Activated naive CD4-positive, alpha-beta T cell treated with anti-CD3 and anti-CD28 coated beads for 36 hours (primary cell): ENCODE measurements at regions of chr6 and their contacts with region 1.

Region 1: DNA sequence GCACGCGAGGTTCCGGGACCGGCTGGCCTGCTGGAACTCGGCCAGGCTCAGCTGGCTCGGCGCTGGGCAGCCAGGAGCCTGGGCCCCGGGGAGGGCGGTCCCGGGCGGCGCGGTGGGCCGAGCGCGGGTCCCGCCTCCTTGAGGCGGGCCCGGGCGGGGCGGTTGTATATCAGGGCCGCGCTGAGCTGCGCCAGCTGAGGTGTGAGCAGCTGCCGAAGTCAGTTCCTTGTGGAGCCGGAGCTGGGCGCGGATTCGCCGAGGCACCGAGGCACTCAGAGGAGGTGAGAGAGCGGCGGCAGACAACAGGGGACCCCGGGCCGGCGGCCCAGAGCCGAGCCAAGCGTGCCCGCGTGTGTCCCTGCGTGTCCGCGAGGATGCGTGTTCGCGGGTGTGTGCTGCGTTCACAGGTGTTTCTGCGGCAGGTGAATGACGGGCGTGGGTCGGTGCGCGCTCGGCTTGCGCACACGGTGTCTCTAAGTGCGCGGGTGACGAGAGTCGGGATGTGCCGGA is at the start of gene CDKN1A:
- DNase-seq: peak; percentile 81
- H3K4me3 Mint-ChIP-seq: peak within 1 kb of the TSS; percentile 99
- H3K27ac Mint-ChIP-seq: peak within 1 kb of the TSS; percentile 86
- H3K4me1 Mint-ChIP-seq: peaks cover 47% of the 10 kb centered on the region
- H3K27me3 Mint-ChIP-seq: peaks cover 13% of the 10 kb centered on the region
- total RNA-seq, gene CDKN1A: 90.1 to 92.3 TPM

Region 2: DNA sequence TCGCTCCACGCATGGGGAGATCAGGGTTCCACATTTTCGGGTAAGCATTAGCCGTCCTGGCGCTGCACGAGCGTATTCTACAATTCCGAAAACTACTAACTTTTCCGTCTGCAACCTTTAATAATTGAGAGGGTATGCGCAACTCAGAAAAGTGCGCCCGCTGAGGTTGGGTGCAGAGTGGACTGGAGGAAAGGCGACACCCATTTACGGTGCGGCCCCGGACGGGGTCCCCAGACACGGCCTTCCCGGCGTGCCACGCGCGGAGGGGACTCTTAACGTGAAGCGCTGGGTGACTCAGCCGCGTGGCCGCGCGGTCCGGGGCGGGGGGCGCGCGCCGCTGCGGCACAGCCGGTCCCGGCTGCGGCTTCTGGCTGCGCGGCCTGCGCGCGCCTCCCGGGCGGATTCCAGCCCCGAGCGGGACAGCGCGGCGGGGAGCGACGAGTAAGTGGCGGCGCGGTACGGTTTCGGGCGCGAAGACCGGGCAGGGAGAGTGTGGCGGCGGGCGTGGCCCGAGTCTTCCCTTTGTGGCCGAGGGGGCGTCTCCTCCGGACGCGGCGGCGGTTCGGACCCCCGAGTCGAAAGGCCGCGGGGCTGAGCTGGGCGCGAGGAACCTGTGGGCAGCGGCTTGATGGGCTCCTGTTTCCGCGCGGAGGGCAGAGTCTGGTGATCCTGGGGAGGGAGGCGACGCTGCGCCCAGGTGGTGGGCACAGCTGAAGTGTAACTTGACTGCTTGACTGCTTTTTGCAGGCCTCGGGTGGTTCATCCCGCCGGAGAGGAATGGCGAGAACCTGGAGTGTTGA is 235.7 kb before region 1 on chr6 and contains the starts of genes KCTD20 and PXT1:
- CTCF ChIA-PET with region 1: no interaction called
- intact Hi-C with region 1: loop called (anchors 1 kb)
- DNase-seq: peak; percentile 93
- H3K4me3 Mint-ChIP-seq: peak within 1 kb of the TSS; percentile 87
- H3K27ac Mint-ChIP-seq: peak within 1 kb of the TSS; percentile 98
- H3K4me1 Mint-ChIP-seq: peaks cover 41% of the 10 kb centered on the region
- H3K27me3 Mint-ChIP-seq: no peaks in the 10 kb centered on the region
- total RNA-seq, gene KCTD20: 30.5 to 32.8 TPM
- total RNA-seq, gene PXT1: 0.15 to 0.29 TPM

Region 3: DNA sequence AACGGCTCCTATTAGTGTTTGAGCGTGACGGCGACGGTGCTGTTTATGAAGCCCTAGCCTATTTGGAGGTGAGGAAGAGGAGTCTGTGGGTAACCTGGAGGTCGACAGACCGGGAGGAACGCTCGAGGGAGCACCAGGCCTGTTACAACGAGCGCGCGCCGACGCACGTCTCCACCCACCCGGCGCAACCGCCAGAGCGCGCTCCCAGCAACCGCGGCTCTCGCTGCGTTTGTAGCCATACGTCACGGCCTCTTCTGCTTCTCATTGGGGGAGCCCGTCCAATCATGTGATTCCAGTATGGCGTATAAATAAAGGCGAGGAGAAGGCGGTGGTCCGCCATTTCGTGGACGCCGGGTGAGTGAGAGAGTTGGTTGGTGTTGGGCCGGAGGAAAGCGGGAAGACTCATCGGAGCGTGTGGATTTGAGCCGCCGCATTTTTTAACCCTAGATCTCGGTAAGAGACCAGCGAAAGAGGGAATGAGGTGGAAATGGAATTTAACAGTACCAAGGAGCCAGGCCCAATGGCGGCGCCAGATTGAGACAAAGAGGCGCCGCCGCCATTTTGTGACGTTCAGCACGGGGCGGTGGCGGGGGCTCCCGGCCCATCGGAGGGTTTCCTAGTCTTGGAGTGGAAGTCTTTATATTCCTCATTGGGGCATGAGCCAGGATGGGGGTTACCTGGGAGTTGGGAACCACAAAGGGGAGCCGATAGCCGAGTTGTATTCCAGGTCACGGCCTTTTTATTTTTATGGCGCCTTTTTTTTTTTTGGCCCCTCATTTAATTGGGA is 84.4 kb before region 1 on chr6 and contains the start of gene SRSF3:
- CTCF ChIA-PET with region 1: interaction called, 4 read pairs
- intact Hi-C with region 1: loop called (anchors 1 kb)
- DNase-seq: peak; percentile 98
- H3K4me3 Mint-ChIP-seq: peak within 1 kb of the TSS; percentile 92
- H3K27ac Mint-ChIP-seq: peak within 1 kb of the TSS; percentile 98
- H3K4me1 Mint-ChIP-seq: peaks cover 31% of the 10 kb centered on the region
- H3K27me3 Mint-ChIP-seq: no peaks in the 10 kb centered on the region
- total RNA-seq, gene SRSF3: 250 to 269 TPM

Region 4: DNA sequence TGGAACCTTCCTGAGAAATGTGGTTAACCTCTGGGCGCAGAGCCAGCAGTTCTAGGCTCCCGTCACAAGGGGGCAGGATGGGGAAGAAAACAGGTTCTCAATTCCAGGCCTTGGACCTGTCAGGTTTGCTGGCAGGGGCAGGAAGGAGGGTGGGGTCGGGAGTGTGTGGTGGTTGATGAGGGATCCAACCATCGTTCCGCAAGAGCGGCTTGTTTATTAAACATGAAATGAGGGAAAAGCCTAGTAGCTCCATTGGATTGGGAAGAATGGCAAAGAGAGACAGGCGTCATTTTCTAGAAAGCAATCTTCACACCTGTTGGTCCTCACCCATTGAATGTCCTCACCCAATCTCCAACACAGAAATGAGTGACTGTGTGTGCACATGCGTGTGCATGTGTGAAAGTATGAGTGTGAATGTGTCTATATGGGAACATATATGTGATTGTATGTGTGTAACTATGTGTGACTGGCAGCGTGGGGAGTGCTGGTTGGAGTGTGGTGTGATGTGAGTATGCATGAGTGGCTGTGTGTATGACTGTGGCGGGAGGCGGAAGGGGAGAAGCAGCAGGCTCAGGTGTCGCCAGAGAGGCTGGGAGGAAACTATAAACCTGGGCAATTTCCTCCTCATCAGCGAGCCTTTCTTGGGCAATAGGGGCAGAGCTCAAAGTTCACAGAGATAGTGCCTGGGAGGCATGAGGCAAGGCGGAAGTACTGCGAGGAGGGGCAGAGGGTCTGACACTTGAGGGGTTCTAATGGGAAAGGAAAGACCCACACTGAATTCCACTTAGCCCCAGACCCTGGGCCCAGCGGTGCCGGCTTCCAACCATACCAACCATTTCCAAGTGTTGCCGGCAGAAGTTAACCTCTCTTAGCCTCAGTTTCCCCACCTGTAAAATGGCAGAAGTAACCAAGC is 54.8 kb before region 1 on chr6:
- CTCF ChIA-PET with region 1: interaction called, 11 read pairs
- intact Hi-C with region 1: loop called (anchors 1 kb)
- DNase-seq: peak; percentile 91
- H3K4me3 Mint-ChIP-seq: no peak overlapping the region
- H3K27ac Mint-ChIP-seq: no peak overlapping the region
- H3K4me1 Mint-ChIP-seq: peaks cover 14% of the 10 kb centered on the region
- H3K27me3 Mint-ChIP-seq: no peaks in the 10 kb centered on the region

Region 5: GRCh38 chr6:36724514-36725390 is 46.2 kb after region 1 on chr6:
- CTCF ChIA-PET with region 1: interaction called, 4 read pairs
- intact Hi-C with region 1: loop called (anchors 1 kb)
- DNase-seq: peak; percentile 88
- H3K4me3 Mint-ChIP-seq: no peak overlapping the region
- H3K27ac Mint-ChIP-seq: no peak overlapping the region
- H3K4me1 Mint-ChIP-seq: peaks cover 13% of the 10 kb centered on the region
- H3K27me3 Mint-ChIP-seq: no peaks in the 10 kb centered on the region

Region 6: GRCh38 chr6:36820700-36821580 is 142.4 kb after region 1 on chr6:
- CTCF ChIA-PET with region 1: no interaction called
- intact Hi-C with region 1: no loop called
- DNase-seq: no peak
- H3K4me3 Mint-ChIP-seq: no peak overlapping the region
- H3K27ac Mint-ChIP-seq: no peak overlapping the region
- H3K4me1 Mint-ChIP-seq: no peaks in the 10 kb centered on the region
- H3K27me3 Mint-ChIP-seq: no peaks in the 10 kb centered on the region

Region 7: GRCh38 chr6:37005061-37005810 is 326.7 kb after region 1 on chr6 and contains the start of gene FGD2:
- CTCF ChIA-PET with region 1: no interaction called
- intact Hi-C with region 1: no loop called
- DNase-seq: no peak
- H3K4me3 Mint-ChIP-seq: no peak within 1 kb of the TSS
- H3K27ac Mint-ChIP-seq: peak within 1 kb of the TSS; percentile 54
- H3K4me1 Mint-ChIP-seq: peaks cover 10% of the 10 kb centered on the region
- H3K27me3 Mint-ChIP-seq: no peaks in the 10 kb centered on the region
- total RNA-seq, gene FGD2: 0.25 to 0.48 TPM